ENCODE measurements at regions of chr1 and their contacts with region 1.

Region 1: DNA sequence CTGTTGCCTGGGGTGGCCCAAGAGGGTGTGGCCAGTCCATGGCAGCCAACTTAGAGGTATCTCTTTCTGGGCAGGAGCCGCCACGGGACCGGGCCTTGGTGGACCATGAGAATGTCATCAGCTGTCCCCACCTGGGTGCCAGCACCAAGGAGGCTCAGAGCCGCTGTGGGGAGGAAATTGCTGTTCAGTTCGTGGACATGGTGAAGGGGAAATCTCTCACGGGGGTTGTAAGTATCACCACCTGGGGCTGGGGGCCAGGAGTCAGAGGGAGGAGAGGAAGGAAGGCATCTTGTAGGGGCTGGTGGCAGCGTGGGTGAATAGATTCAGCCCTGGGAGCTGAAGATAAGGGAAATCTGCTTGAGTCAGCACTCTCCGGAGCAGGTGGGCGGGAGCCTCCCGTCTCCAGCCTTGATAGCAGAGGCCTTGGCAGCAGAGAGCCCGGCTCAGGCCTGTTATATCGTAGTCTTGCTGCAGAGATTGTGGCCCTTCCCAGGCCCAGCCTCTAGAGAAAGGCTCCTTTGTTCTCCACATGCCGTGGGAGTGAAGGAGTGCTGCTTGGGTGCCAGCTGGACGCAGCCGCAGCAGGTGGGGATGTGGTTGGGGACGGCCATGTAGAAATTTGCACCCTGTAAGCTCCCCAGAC is 25.4 kb downstream of the PHGDH start:
- DNase-seq: no peak
- ATAC-seq: no peak
- H3K4me3 ChIP-seq: no peak overlapping the region
- H3K27ac ChIP-seq: no peak overlapping the region
- H3K4me1 ChIP-seq: 0 out of 2 replicates have a peak, but pooled peaks cover 2% of the 10 kb centered on the region
- H3K27me3 ChIP-seq: no peaks in the 10 kb centered on the region
- CTCF ChIP-seq: no peak
- POLR2A ChIP-seq: no peak
- RAD21 ChIP-seq: no peak

Region 2: DNA sequence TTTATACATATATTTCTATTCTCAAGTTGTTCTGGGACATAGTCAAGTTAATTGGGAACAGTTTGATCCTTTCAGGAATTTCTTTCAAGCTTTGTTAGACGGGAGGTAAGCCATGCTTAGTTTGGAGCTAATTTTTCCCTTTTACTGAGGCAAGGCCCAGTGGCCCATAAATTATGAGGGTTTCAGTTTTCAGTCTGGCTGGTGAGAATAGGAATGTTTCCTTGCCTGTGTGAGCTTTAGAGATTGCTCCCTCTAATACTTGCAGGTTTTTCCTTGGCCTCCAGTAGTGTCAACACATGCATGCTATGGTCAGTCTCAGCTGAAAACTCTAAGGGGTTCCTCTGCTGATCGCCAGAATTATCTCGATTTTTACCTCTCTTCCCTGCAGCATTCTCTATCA is 39.6 kb before region 1 on chr1:
- CTCF ChIA-PET with region 1: no interaction called
- POLR2A ChIA-PET with region 1: no interaction called
- dilution Hi-C with region 1: no loop called
- in situ Hi-C with region 1: no loop called
- intact Hi-C with region 1: no loop called
- DNase-seq: no peak
- ATAC-seq: no peak
- H3K4me3 ChIP-seq: no peak overlapping the region
- H3K27ac ChIP-seq: no peak overlapping the region
- H3K4me1 ChIP-seq: no peaks in the 10 kb centered on the region
- H3K27me3 ChIP-seq: peaks cover 12% of the 10 kb centered on the region
- CTCF ChIP-seq: no peak
- POLR2A ChIP-seq: no peak
- RAD21 ChIP-seq: no peak

Region 3: DNA sequence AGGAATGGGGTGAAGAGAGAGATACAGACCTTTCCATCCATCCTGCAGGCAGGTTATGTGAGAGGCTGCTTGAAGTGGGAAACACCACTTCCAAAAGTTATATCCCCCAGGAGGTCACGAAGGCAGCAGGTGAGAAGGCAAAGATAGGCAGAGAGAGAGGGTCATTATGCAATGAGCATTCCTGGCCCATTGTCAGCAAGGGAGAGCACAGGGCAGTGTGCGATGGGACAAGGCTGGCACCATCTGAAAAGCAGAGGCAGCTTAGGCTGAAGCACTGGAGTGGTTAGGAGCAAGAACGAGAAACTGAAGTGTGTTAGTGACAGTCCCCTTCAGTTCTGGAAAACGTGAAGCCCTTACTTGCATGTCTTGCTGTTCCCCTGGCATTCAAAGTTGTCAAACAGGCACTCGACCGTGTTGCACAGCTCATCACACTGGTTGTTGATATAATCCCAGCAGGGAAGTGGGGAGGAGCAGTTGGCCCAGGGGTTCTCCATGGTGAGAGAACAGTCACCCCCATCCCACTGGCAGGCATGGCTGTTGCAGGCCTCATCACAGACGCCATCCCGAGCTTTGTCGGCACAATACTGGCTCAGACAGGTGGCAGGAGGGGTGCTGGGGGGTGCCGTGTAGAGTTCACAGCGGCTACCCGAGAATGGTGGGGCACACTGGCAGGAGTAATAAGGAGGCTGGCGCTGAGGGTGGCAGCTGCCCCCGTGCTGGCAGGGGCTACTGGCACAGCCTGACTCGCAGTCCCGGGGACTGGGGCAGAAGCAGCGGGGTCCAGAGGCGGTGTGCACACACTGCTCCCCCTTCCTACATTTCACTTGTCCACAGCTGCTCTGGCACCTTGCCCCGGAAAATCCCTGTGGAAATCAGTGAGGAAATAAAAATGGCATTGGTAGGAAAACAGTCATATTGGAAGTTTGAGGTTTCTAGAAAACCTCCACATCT is 188.1 kb after region 1 on chr1:
- CTCF ChIA-PET with region 1: no interaction called
- POLR2A ChIA-PET with region 1: no interaction called
- dilution Hi-C with region 1: no loop called
- in situ Hi-C with region 1: loop called (anchors 10 kb)
- intact Hi-C with region 1: loop called (anchors 10 kb)
- DNase-seq: no peak
- ATAC-seq: no peak
- H3K4me3 ChIP-seq: no peak overlapping the region
- H3K27ac ChIP-seq: no peak overlapping the region
- H3K4me1 ChIP-seq: no peaks in the 10 kb centered on the region
- H3K27me3 ChIP-seq: no peaks in the 10 kb centered on the region
- CTCF ChIP-seq: no peak
- POLR2A ChIP-seq: no peak
- RAD21 ChIP-seq: no peak

Measured in IMR-90 (cell line).